Right ventricle myocardium inferior (tissue), 1 donor: ENCODE measurements at regions of chr1 and their contacts with region 1.

Region 1: DNA sequence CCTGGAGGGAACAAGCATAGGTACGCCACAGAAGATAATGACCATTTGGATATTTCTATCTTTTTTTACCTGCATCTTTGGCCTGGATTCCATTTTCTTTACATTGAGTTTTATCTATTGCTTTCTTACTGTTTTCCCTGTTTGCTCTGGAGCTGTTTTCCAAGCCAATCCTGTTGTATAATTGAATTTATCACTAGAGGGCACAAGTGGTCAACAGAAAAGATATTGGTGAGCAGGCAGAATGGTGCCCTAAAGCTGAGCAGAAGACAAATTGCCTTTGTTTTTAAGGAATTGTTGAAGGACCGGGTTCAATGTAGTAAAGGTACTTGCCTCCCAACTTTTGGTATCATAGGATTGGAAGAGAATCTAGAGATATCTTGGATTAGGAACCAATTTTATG is 152.8 kb downstream of the PPP1R12B start:
- DNase-seq: no peak
- ATAC-seq: peak; percentile 33

Region 2: GRCh38 chr1:202247894-202248681 is 253.2 kb before region 1 on chr1:
- intact Hi-C with region 1: no loop called
- DNase-seq: no peak
- ATAC-seq: no peak

Region 3: DNA sequence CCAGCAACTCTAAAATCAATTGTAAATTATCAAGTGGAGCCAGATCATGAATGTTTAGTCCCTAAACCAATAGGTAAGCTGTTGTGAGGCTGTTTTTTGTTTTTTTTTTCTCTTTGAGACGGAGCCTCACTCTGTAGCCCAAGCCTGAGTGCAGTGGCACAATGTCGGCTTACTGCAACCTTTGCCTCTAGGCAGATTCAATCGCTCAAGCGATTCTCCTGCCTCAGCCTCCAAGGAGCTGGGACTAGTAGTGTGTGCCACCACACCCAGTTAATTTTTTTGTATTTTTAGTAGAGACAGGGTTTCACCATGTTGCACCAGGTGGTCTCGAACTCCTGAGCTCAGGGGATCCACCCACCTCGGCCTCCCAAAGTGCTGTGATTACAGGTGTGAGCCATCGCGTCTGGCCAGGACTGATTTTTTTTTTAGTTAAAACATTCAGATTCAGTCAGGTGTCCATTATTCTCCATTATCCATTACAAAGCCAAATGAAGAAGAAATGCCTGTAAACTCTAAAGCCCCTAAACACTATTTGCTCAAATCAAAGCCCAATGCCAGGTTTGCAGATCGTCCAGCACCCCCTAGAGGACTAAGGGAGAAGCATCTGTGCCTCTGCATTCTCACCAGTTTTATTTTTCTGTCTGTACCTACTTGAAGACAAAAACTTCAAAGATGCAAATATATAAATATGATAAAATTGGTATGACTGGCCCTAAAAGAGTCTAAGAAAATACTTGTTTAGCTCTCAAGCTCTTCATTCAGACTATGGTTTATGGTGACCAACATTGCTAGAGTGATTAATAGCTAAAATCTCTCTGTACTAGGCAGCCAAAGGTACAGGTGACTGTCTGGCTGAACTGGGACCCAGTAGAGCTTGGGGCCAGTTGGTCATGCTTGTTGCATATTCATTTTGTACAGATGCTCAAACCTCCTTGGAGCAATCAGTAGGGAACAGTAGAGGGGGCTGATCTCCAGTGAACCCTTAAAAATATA is 70.4 kb after region 1 on chr1:
- intact Hi-C with region 1: loop called (anchors 5 kb)
- DNase-seq: no peak
- ATAC-seq: no peak

Region 4: GRCh38 chr1:202599677-202600431 is 98.6 kb after region 1 on chr1:
- intact Hi-C with region 1: loop called (anchors 5 kb)
- DNase-seq: no peak
- ATAC-seq: peak; percentile 75